Endothelial cell of umbilical vein (primary cell): ENCODE measurements at regions of chr3 and their contacts with region 1.

Region 1: DNA sequence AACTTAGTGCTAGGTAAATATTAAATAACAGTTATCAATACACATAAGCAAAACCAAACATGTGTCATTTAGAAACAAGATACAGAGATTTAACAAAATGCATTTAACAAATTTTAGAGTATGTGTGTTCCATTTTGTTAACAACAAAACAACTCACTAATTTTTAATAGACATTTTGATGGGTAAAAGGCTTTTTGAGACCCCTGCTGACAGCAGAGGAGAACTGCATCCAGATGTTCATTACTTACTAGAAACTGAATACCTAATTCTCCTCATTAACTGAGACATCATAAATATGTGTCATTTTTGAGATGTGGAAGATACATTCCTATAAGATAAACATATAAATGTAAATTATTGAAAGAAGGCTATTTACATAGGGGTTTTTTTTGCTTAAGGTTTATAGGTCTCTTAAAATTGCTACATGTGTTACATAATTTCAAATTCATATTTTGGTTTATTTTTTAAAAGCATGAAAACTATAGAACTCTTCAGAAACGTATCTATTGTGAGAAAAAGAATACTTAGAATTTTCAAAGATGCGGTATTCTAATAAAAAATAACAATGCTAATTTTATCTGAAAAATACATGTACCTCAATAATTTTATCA is 1009.8 kb downstream of the TUSC7 start:
- DNase-seq: peak; percentile 45
- H3K4me3 ChIP-seq: no peak overlapping the region
- H3K27ac ChIP-seq: no peak overlapping the region
- H3K4me1 ChIP-seq: no peaks in the 10 kb centered on the region
- H3K27me3 ChIP-seq: peaks cover 0 to 3% of the 10 kb centered on the region in 2 experiments
- CTCF ChIP-seq: peak; percentile 52 to 63
- POLR2A ChIP-seq: no peak

Region 2: DNA sequence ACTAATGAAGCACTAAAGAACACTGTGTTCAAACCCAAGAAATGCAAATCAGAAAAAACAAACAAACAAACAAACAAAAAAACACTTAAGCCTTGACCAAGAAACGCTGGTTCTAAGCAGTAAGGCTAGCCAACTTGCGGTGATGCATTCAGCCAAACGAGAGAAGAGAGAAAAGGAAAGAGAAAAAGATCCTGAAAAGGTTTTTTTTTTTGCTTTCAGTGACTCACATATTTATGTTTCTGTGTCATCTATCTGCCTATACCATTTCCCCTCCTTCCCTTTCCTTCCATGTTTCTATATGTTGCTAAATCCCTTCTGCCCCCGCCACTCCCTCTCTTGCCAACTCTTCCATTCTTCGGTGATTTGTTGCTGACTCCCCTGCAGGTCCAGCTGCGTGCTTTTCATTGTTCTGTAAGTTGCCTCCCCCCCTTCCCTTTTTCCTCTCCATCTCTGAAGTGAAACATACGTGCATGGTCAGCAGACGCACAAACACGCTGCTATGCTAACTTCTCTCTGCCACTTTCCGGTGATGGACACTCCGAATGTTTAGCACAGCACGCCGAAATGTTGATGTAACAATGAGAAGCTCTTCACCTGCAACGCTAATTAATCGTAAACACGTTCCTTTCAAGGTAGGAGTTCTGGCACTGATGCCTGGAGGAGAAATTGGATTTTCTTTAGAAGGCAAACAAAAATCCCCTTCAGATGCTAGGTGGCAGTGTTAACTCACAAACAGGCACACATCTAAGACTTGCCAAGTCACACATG is 855.4 kb before region 1 on chr3:
- CTCF ChIA-PET with region 1: no interaction called
- POLR2A ChIA-PET with region 1: no interaction called
- dilution Hi-C with region 1: no loop called
- intact Hi-C with region 1: loop called (anchors 1 kb)
- DNase-seq: peak; percentile 79
- H3K4me3 ChIP-seq: peak overlapping the region; percentile 17 to 66 (median 28)
- H3K27ac ChIP-seq: no peak overlapping the region
- H3K4me1 ChIP-seq: peaks cover 3% of the 10 kb centered on the region
- H3K27me3 ChIP-seq: peaks cover 4% of the 10 kb centered on the region in 2 experiments
- CTCF ChIP-seq: peak; percentile 41 to 45
- POLR2A ChIP-seq: no peak

Region 3: DNA sequence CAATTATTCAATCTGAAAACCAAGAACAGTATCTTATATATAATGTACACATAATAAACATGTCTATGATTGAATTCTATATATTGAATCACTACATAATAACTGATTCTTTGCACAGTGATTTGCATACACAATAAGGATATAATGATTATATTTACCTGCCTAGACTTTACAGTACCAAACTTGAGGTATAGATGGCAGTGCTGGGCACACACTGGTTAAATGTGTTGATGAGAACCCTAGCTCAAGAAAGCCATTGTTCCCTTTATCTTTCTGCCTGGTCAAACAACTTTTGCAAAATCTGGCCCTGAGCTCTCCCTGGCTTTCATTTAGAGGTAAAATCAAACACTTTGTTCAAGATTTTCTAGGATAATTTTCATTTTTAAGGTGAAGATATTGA is 312.1 kb before region 1 on chr3:
- CTCF ChIA-PET with region 1: interaction called, 8 read pairs
- POLR2A ChIA-PET with region 1: no interaction called
- dilution Hi-C with region 1: no loop called
- intact Hi-C with region 1: loop called (anchors 1 kb)
- DNase-seq: peak; percentile 40
- H3K4me3 ChIP-seq: no peak overlapping the region
- H3K27ac ChIP-seq: no peak overlapping the region
- H3K4me1 ChIP-seq: no peaks in the 10 kb centered on the region
- H3K27me3 ChIP-seq: no peaks in the 10 kb centered on the region
- CTCF ChIP-seq: peak; percentile 15 to 40
- POLR2A ChIP-seq: no peak

Region 4: DNA sequence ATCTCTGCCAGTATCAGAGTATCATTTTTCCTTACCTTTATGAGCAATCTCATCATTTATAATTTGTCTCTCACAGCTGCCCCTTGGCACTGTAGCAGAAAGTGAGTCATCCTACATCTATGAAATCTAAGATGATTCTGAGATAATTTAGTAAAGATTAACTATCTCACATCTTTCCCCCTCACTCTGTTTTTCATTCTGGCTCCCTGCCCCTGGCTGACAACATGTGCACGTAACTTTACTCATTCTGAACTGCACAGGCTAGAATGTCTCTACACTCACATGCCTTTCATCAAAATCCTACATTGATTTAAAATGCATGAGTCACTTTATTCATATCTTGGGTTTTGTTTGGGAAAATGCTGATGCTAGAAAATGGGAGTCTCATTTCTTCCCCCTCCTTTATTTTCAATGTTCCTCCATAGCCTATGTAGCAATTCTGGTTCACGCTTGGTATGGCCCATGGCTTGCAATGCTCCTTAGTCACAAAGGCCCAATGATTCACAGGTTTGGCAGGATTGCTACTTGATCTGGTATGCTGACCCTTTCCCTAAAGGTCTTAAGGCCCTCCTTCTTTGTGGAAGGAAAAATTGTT is 171.4 kb before region 1 on chr3:
- CTCF ChIA-PET with region 1: interaction called, 3 read pairs
- POLR2A ChIA-PET with region 1: no interaction called
- dilution Hi-C with region 1: no loop called
- intact Hi-C with region 1: loop called (anchors 5 kb)
- DNase-seq: no peak
- H3K4me3 ChIP-seq: no peak overlapping the region
- H3K27ac ChIP-seq: no peak overlapping the region
- H3K4me1 ChIP-seq: no peaks in the 10 kb centered on the region
- H3K27me3 ChIP-seq: no peaks in the 10 kb centered on the region
- CTCF ChIP-seq: no peak
- POLR2A ChIP-seq: no peak

Region 5: DNA sequence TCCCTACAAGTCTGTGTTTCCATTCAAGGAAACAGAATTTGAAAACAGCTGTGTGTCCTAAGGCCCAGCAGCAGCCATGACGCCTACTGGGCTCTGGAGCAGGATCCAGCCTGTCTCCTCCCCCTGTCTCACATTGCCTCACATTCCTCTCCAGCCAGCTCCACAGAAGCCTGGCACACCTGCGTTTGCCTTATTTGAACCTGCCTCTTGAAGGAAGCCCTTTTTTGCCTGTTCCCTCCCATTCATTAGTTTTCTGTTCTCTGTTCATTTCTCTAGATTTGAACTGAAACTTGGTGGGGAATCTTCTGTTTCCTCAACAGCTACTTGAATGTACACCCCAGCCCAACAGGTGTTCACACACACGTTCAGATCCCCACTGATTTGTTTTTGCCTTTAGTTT is 119.3 kb before region 1 on chr3:
- CTCF ChIA-PET with region 1: no interaction called
- POLR2A ChIA-PET with region 1: no interaction called
- dilution Hi-C with region 1: no loop called
- intact Hi-C with region 1: no loop called
- DNase-seq: no peak
- H3K4me3 ChIP-seq: no peak overlapping the region
- H3K27ac ChIP-seq: no peak overlapping the region
- H3K4me1 ChIP-seq: no peaks in the 10 kb centered on the region
- H3K27me3 ChIP-seq: no peaks in the 10 kb centered on the region
- CTCF ChIP-seq: no peak
- POLR2A ChIP-seq: no peak

Region 6: GRCh38 chr3:117622171-117622841 is 97.1 kb before region 1 on chr3:
- CTCF ChIA-PET with region 1: no interaction called
- POLR2A ChIA-PET with region 1: no interaction called
- dilution Hi-C with region 1: no loop called
- intact Hi-C with region 1: loop called (anchors 2 kb)
- DNase-seq: peak; percentile 91
- H3K4me3 ChIP-seq: peak overlapping the region in 1 of 3 experiments; percentile 31
- H3K27ac ChIP-seq: peak overlapping the region; percentile 97
- H3K4me1 ChIP-seq: peaks cover 22% of the 10 kb centered on the region
- H3K27me3 ChIP-seq: no peaks in the 10 kb centered on the region
- CTCF ChIP-seq: no peak
- POLR2A ChIP-seq: peak; percentile 45

Region 7: DNA sequence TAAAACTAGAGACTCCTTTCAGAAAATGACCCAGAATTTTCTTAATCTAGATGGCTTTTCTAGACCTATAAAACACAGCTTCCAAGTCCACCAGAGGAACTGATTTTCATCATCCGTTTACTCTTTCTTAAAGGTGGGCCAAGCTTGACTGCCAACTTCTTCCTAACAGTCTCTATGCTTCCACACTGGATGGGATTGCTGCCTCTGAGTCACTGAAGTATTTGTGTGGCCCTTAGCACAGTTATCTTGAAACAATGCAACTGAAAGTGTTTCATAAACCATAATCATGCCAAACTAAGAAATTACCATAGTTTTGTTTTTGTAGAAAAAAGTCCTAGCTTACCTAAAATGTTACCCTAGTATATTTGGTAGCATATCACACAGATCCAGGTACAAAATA is 24.1 kb before region 1 on chr3:
- CTCF ChIA-PET with region 1: no interaction called
- POLR2A ChIA-PET with region 1: no interaction called
- dilution Hi-C with region 1: no loop called
- intact Hi-C with region 1: no loop called
- DNase-seq: no peak
- H3K4me3 ChIP-seq: no peak overlapping the region
- H3K27ac ChIP-seq: no peak overlapping the region
- H3K4me1 ChIP-seq: peaks cover 7% of the 10 kb centered on the region
- H3K27me3 ChIP-seq: no peaks in the 10 kb centered on the region
- CTCF ChIP-seq: no peak
- POLR2A ChIP-seq: no peak

Region 8: DNA sequence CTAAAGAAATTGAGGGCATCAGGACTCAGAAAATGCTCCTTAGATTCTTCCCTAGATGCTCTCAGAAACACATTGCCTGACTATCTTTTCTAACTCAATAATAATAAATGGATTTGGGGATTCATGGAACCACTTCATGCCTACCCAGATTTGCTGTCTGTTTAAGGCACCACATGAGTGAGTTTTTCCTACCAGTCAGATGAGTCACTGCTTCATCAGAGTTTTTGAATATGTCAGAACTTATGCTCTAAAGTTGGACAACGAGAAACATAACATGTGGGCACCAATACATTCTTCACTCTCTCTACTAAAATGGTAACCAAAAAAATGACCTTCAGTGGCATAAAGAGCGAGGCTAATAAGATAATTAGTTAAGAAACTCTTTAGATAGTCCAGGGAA is 125.3 kb after region 1 on chr3:
- CTCF ChIA-PET with region 1: no interaction called
- POLR2A ChIA-PET with region 1: no interaction called
- dilution Hi-C with region 1: no loop called
- intact Hi-C with region 1: no loop called
- DNase-seq: no peak
- H3K4me3 ChIP-seq: no peak overlapping the region
- H3K27ac ChIP-seq: no peak overlapping the region
- H3K4me1 ChIP-seq: no peaks in the 10 kb centered on the region
- H3K27me3 ChIP-seq: no peaks in the 10 kb centered on the region
- CTCF ChIP-seq: no peak
- POLR2A ChIP-seq: no peak

Region 9: GRCh38 chr3:117997201-117998049 is 278.0 kb after region 1 on chr3:
- CTCF ChIA-PET with region 1: interaction called, 3 read pairs
- POLR2A ChIA-PET with region 1: no interaction called
- dilution Hi-C with region 1: no loop called
- intact Hi-C with region 1: loop called (anchors 10 kb)
- DNase-seq: peak; percentile 84
- H3K4me3 ChIP-seq: peak overlapping the region in 2 of 3 experiments; percentile 32 to 44
- H3K27ac ChIP-seq: no peak overlapping the region
- H3K4me1 ChIP-seq: peaks cover 4% of the 10 kb centered on the region
- H3K27me3 ChIP-seq: peaks cover 9 to 11% of the 10 kb centered on the region in 2 experiments
- CTCF ChIP-seq: peak; percentile 84 to 97
- POLR2A ChIP-seq: no peak

Region 10: GRCh38 chr3:118292841-118293240 is 573.4 kb after region 1 on chr3:
- CTCF ChIA-PET with region 1: no interaction called
- POLR2A ChIA-PET with region 1: no interaction called
- dilution Hi-C with region 1: no loop called
- intact Hi-C with region 1: no loop called
- DNase-seq: no peak
- H3K4me3 ChIP-seq: no peak overlapping the region
- H3K27ac ChIP-seq: no peak overlapping the region
- H3K4me1 ChIP-seq: no peaks in the 10 kb centered on the region
- H3K27me3 ChIP-seq: no peaks in the 10 kb centered on the region
- CTCF ChIP-seq: no peak
- POLR2A ChIP-seq: no peak